ENCODE measurements at regions of chr1 and their contacts with region 1.

Region 1: GRCh38 chr1:219837274-219837993 is 90.9 kb downstream of the SLC30A10 start:
- DNase-seq: peak; percentile 30
- ATAC-seq: peak; percentile 93
- H3K4me3 ChIP-seq: no peak overlapping the region
- H3K27ac ChIP-seq: no peak overlapping the region
- H3K4me1 ChIP-seq: no peaks in the 10 kb centered on the region
- H3K27me3 ChIP-seq: peaks cover 23% of the 10 kb centered on the region
- CTCF ChIP-seq: peak; percentile 74

Region 2: GRCh38 chr1:219959540-219960203 is 122.2 kb after region 1 on chr1:
- CTCF ChIA-PET with region 1: no interaction called
- POLR2A ChIA-PET with region 1: no interaction called
- in situ Hi-C with region 1: no loop called
- intact Hi-C with region 1: loop called (anchors 10 kb)
- DNase-seq: no peak
- ATAC-seq: no peak
- H3K4me3 ChIP-seq: no peak overlapping the region
- H3K27ac ChIP-seq: no peak overlapping the region
- H3K4me1 ChIP-seq: no peaks in the 10 kb centered on the region
- H3K27me3 ChIP-seq: no peaks in the 10 kb centered on the region
- CTCF ChIP-seq: no peak

Measured in Panc1 (cell line).